ENCODE measurements at regions of chr2 and their contacts with region 1.

Region 1: DNA sequence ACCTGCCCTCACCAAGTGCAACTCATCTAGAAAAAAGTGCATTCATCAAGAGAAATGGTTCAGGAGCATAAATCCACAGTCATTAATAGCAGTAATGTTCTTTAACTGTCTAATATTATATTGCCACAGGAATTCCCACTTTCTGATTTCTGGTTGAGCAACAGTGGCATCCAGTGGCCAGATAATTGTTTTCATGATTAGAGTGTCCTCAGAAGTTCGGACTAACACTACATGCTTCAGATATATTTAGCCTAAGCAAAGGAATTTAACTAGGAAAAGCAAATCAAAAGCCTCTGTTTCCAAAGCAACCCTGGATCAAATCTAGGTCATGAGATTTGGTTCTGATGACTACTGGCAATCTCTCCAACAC is 9.8 kb upstream of the ERBB4 start:
- DNase-seq: peak in 1 of 2 donors; percentile 64
- H3K4me3 ChIP-seq: no peak overlapping the region
- H3K27ac ChIP-seq: no peak overlapping the region
- H3K4me1 ChIP-seq: peaks cover 0 to 6% of the 10 kb centered on the region in 2 donors
- H3K27me3 ChIP-seq: no peaks in the 10 kb centered on the region
- CTCF ChIP-seq: peak; percentile 34 to 64 (median 57)

Region 2: DNA sequence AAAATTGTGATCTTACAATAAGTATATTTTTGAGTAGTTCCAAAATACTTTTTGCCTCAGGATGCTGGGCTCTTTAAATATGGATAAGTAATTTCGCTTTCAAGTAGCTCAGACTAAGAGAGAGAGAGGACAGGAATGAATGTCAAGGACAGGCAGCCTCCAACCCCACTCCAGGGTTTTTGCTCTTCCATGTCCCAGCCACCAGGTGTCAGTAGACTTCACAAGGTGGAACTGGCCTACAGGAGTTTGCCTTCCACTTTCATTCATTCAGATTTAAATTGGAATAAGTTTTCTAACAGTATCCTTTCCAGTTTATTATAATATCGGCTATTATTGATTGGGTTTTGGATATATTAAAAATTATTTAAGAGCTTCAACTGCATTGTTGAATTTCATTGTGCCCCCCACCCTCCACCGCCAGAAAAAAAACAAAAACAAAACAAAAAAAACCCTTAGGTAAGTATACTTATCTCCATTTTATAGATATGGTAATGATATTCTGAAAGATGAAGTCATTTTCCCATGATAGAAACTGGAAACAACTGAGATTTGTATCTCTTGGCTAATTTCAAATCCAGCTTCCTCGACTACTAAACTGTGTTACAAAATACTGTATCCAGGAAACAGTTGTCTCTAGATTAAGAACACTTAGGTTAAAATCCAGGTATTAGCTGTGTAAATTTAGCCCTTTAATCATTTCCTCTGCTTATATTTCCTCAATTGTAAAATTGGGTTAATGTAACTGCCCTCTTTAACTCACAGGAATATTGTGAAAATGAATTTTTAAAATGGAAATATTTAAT is 802.9 kb before region 1 on chr2:
- intact Hi-C with region 1: loop called (anchors 5 kb)
- DNase-seq: no peak
- H3K4me3 ChIP-seq: no peak overlapping the region
- H3K27ac ChIP-seq: no peak overlapping the region
- H3K4me1 ChIP-seq: no peaks in the 10 kb centered on the region
- H3K27me3 ChIP-seq: no peaks in the 10 kb centered on the region
- CTCF ChIP-seq: peak; percentile 45 to 88 (median 88)

Measured in ascending aorta (tissue), 2 donors.